ENCODE measurements at regions of chr10 and their contacts with region 1.

Region 1: GRCh38 chr10:45111509-45111908 is 110.8 kb downstream of the ZNF22 start:
- DNase-seq: no peak
- ATAC-seq: no peak
- H3K4me3 ChIP-seq: no peak overlapping the region
- H3K27ac ChIP-seq: no peak overlapping the region
- H3K4me1 ChIP-seq: no peaks in the 10 kb centered on the region
- H3K27me3 ChIP-seq: peaks cover 2% of the 10 kb centered on the region
- CTCF ChIP-seq: no peak

Region 2: DNA sequence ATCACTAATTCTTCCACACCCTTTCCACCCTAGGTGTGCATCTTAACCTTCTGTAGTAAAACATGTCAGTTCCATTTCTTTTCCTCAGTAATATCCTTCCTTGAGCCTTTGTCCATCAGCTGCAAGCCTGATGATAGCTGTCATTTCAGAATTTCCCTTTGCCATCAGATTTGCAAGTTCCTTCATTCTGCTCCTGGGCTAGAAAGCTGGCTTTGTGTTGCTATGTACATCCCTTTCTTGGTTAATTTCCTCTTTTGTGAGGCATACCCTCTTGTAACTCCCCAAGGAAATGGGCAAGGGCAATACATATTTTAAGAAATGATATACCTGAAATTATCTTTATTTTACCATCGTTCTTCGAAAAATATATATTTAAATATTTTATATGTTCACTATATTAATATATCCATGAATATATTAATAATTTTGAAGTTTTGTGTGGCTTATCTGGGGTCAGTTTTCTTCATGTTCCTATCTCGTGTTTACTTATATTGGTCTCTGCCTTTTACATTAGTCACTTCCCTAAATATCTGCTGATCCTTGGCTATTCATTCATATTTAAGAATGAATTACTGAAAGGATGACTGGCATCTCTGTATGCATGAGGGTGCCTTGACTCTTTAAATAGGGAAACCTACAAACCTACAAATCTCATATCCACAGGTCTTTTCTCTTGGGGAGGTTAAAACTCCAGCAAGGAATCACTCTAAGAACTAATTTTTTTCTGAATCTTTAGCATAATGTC is 33.0 kb after region 1 on chr10:
- CTCF ChIA-PET with region 1: interaction called, 16 read pairs
- POLR2A ChIA-PET with region 1: no interaction called
- in situ Hi-C with region 1: no loop called
- intact Hi-C with region 1: no loop called
- DNase-seq: no peak
- ATAC-seq: no peak
- H3K4me3 ChIP-seq: no peak overlapping the region
- H3K27ac ChIP-seq: no peak overlapping the region
- H3K4me1 ChIP-seq: no peaks in the 10 kb centered on the region
- H3K27me3 ChIP-seq: peaks cover 6% of the 10 kb centered on the region
- CTCF ChIP-seq: no peak

Measured in Panc1 (cell line).